OCI-LY7 (cell line): ENCODE measurements at regions of chr5 and their contacts with region 1.

Region 1: DNA sequence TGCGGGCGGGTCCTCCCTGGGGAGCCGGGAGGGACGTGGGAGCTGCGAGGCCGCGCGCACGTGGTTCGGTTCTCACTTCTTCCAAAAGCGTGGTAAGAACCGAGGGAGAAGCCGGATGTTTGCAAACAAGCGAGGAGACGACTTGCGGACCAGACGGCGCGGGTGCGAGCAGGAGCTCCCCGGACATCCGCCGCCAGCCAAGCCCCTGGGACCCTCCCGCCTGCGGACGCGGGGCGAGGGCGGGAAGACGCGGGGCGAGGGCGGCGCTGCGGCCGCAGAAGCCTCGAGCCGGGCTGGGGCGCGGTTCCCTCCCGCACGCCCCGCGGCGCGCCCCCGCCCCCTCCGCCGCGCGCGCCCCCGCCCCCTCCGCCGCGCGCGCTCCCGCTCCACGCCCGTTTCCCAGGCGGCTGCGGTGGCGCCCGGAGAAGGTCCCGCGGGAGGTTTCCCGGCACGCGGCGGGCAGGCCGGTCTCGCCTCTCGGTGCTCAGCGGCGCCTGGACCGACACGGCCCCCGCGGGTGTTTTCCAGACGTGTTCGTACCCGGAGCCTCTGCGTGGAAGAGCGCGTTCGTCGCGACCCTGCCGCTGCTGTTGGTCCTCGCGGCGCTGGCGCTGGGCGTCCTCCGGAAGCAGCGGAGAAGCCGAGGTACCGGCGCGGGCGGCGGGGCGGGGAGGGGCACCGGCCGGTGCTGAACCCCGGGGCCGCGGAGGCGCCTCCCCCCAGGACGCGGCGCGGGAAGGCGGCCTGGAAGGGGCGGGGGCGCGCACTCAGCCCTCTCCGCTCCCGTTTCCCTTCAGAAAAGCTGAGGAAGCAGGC is 12.8 kb downstream of the BTNL9 start:
- DNase-seq: peak; percentile 86
- H3K4me3 ChIP-seq: peak overlapping the region; percentile 84
- H3K27ac ChIP-seq: peak overlapping the region; percentile 99
- H3K4me1 ChIP-seq: peaks cover 76% of the 10 kb centered on the region
- CTCF ChIP-seq: no peak

Region 2: GRCh38 chr5:180591311-180591887 is 461.5 kb before region 1 on chr5 and contains the start of gene SCGB3A1:
- CTCF ChIA-PET with region 1: no interaction called
- POLR2A ChIA-PET with region 1: no interaction called
- intact Hi-C with region 1: no loop called
- DNase-seq: no peak
- H3K4me3 ChIP-seq: no peak within 1 kb of the TSS
- H3K27ac ChIP-seq: no peak within 1 kb of the TSS
- H3K4me1 ChIP-seq: no peaks in the 10 kb centered on the region
- CTCF ChIP-seq: no peak
- total RNA-seq, gene SCGB3A1: not detected in 2 replicates

Region 3: DNA sequence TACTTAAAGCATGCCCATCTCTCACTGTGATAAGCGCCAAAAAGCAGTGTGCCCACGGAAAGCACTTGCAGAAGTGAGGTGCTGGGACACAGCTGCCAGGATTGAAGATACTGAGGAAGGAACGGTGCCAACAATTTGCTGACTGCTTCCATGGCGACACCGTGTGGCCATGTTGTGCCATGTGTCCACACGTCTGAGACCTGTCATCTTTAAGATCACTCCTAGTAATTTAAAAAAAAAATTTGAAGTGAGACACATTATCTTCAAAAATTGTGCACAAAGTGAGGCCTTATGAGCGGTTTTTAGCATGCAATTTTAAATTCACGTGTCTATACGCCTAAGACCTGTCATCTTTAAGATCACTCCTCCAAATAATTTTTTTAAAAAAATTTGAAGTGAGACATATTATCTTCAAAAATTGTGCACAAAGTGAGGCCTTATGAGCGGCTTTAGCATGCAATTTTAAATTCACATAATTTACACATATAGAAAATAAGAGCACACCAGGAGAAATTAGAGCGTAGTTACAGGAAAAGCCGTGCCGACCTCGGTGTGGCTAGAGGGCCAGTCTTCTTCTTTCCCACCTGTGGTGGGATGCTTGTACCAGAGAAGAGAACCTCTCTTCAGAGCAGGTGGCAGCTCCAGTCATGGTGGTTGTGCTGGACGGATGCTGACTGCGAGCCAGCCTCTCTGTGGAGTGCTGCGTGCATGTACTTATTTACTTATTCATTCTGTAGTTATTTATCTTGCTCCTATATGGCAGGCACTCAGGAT is 382.1 kb before region 1 on chr5:
- CTCF ChIA-PET with region 1: no interaction called
- POLR2A ChIA-PET with region 1: no interaction called
- intact Hi-C with region 1: no loop called
- DNase-seq: peak; percentile 63
- H3K4me3 ChIP-seq: no peak overlapping the region
- H3K27ac ChIP-seq: no peak overlapping the region
- H3K4me1 ChIP-seq: no peaks in the 10 kb centered on the region
- CTCF ChIP-seq: peak; percentile 93

Region 4: DNA sequence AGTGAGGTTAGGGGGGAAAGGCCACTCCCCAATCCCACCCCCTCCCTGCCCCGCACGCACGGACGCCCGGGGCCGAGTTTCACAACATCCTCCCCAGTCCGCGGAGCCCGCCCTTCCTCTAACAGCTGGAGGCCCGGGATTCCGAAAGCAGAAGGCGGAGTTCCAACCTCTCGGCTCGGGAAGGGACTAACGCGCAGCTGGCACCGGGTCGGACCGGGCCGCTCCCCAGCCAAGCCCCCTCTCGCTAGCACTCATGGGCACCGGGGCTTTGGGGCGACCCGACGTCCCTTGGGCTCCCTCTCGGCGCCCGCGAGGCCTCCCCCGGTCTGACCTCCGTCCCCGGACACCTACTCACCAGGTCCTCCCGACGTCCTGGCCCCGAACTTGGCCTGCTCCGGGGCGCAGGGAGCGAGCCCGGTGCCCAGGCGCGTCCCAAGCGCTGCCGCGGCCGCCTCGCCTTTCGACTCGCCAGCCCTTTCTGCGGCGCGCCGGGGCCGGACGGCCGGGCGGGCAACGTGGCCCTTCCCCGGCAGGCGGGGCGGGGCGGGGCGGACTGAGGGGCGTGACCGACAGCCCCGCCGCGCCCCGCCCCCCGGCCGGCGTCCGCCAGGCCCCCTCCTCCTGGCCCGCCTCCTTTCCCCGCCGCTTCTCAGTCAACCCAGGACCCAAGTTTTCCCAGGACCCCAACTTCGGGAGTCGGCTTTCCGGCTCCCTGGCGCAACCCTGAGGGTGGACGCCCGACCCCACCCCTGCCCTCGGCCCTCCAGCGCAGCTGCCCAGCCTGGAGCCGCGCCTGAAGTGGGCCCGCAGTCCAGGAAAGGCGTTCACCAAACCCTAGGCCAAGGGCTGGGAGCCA is 250.3 kb before region 1 on chr5 and contains the start of gene MGAT1:
- CTCF ChIA-PET with region 1: no interaction called
- POLR2A ChIA-PET with region 1: no interaction called
- intact Hi-C with region 1: loop called (anchors 2 kb)
- DNase-seq: peak; percentile 75
- H3K4me3 ChIP-seq: peak within 1 kb of the TSS; percentile 84
- H3K27ac ChIP-seq: peak within 1 kb of the TSS; percentile 96
- H3K4me1 ChIP-seq: peaks cover 80% of the 10 kb centered on the region
- CTCF ChIP-seq: no peak
- total RNA-seq, gene MGAT1: 65.2 and 75.4 TPM in 2 replicates

Region 5: GRCh38 chr5:180860887-180861822 is 191.7 kb before region 1 on chr5 and contains the start of gene ZFP62:
- CTCF ChIA-PET with region 1: no interaction called
- POLR2A ChIA-PET with region 1: interaction called, 3 read pairs
- intact Hi-C with region 1: loop called (anchors 2 kb)
- DNase-seq: peak; percentile 96
- H3K4me3 ChIP-seq: peak within 1 kb of the TSS; percentile 96
- H3K27ac ChIP-seq: peak within 1 kb of the TSS; percentile 95
- H3K4me1 ChIP-seq: peaks cover 18% of the 10 kb centered on the region
- CTCF ChIP-seq: no peak
- total RNA-seq, gene ZFP62: 58.4 and 59.0 TPM in 2 replicates

Region 6: DNA sequence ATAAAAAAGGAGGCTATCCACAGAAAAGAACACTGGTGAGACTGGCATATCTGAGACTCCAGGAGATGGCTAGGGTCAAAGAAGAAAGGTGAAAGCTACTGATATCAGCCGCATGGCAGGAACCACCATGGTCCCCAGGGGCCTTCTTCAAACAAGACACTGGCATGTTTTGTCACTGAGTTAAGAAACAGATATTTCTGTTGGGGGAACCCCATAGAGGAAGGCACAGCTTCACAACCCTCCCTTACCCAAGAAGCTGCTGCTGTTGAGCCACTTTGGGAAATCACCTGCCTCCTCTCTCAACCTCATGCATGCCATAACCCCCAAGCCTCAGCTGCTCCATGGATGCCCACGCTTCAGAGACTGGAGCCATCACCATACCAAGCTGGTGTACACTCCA is 77.5 kb before region 1 on chr5:
- CTCF ChIA-PET with region 1: no interaction called
- POLR2A ChIA-PET with region 1: no interaction called
- intact Hi-C with region 1: loop called (anchors 5 kb)
- DNase-seq: peak; percentile 9
- H3K4me3 ChIP-seq: no peak overlapping the region
- H3K27ac ChIP-seq: no peak overlapping the region
- H3K4me1 ChIP-seq: peaks cover 3% of the 10 kb centered on the region
- CTCF ChIP-seq: no peak

Region 7: GRCh38 chr5:180990086-180990881 is 62.6 kb before region 1 on chr5:
- CTCF ChIA-PET with region 1: no interaction called
- POLR2A ChIA-PET with region 1: no interaction called
- intact Hi-C with region 1: loop called (anchors 5 kb)
- DNase-seq: peak; percentile 4
- H3K4me3 ChIP-seq: peak overlapping the region; percentile 15
- H3K27ac ChIP-seq: no peak overlapping the region
- H3K4me1 ChIP-seq: peaks cover 5% of the 10 kb centered on the region
- CTCF ChIP-seq: no peak

Region 8: GRCh38 chr5:181005791-181006190 is 47.1 kb before region 1 on chr5:
- CTCF ChIA-PET with region 1: no interaction called
- POLR2A ChIA-PET with region 1: no interaction called
- intact Hi-C with region 1: no loop called
- DNase-seq: no peak
- H3K4me3 ChIP-seq: no peak overlapping the region
- H3K27ac ChIP-seq: no peak overlapping the region
- H3K4me1 ChIP-seq: no peaks in the 10 kb centered on the region
- CTCF ChIP-seq: no peak

Region 9: GRCh38 chr5:181064987-181065386 is 12.1 kb after region 1 on chr5:
- CTCF ChIA-PET with region 1: interaction called, 5 read pairs
- POLR2A ChIA-PET with region 1: interaction called, 13 read pairs
- intact Hi-C with region 1: no loop called
- DNase-seq: peak; percentile 22
- H3K4me3 ChIP-seq: peak overlapping the region; percentile 7
- H3K27ac ChIP-seq: peak overlapping the region; percentile 75
- H3K4me1 ChIP-seq: peaks cover 37% of the 10 kb centered on the region
- CTCF ChIP-seq: no peak

Region 10: GRCh38 chr5:181243512-181244343 is 190.8 kb after region 1 on chr5 and contains the start of gene RACK1:
- CTCF ChIA-PET with region 1: no interaction called
- POLR2A ChIA-PET with region 1: interaction called, 3 read pairs
- intact Hi-C with region 1: loop called (anchors 5 kb)
- DNase-seq: peak; percentile 94
- H3K4me3 ChIP-seq: peak within 1 kb of the TSS; percentile 89
- H3K27ac ChIP-seq: peak within 1 kb of the TSS; percentile 89
- H3K4me1 ChIP-seq: peaks cover 53% of the 10 kb centered on the region
- CTCF ChIP-seq: no peak
- total RNA-seq, gene RACK1: 4,583 and 5,614 TPM in 2 replicates